ENCODE measurements at regions of chr15 and their contacts with region 1.

Region 1: DNA sequence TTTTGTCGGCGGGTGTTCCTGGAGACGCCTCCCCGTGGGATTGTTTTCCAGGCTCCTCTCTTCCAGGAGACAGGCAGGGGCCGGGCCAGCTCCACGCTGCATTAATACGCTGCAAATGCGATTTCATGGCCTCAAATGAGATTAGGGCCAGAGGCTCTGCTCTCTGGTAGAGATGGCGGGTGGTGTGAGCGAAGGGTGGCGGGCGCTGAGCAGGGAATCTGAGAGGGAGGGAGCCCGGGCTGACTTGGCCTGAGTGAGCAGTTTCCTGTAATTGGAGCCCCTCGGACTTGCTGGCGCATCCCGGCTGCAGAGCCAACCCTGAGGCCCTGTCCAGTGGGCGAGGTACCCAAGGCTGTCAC is 7.4 kb upstream of the CCDC33 start:
- DNase-seq: no peak
- ATAC-seq: no peak
- H3K4me3 Mint-ChIP-seq: no peak overlapping the region
- H3K27ac Mint-ChIP-seq: no peak overlapping the region
- H3K4me1 Mint-ChIP-seq: peaks cover 1% of the 10 kb centered on the region
- H3K27me3 Mint-ChIP-seq: no peaks in the 10 kb centered on the region
- CTCF ChIP-seq: no peak

Region 2: GRCh38 chr15:74291101-74292071 is 62.7 kb after region 1 on chr15:
- CTCF ChIA-PET with region 1: no interaction called
- POLR2A ChIA-PET with region 1: no interaction called
- intact Hi-C with region 1: loop called (anchors 10 kb)
- DNase-seq: peak; percentile 93
- ATAC-seq: peak; percentile 93
- H3K4me3 Mint-ChIP-seq: no peak overlapping the region
- H3K27ac Mint-ChIP-seq: peak overlapping the region; percentile 84
- H3K4me1 Mint-ChIP-seq: peaks cover 13% of the 10 kb centered on the region
- H3K27me3 Mint-ChIP-seq: peaks cover 21% of the 10 kb centered on the region
- CTCF ChIP-seq: no peak

Measured in activated CD8-positive, alpha-beta T cell treated with anti-CD3 and anti-CD28 coated beads for 36 hours (primary cell).